Upper lobe of right lung (tissue), 1 donor: ENCODE measurements at regions of chr6 and their contacts with region 1.

Region 1: GRCh38 chr6:30489081-30490025 is at the start of gene HLA-E:
- DNase-seq: peak; percentile 92
- ATAC-seq: peak; percentile 94
- H3K4me3 ChIP-seq: peak within 1 kb of the TSS; percentile 93
- H3K27ac ChIP-seq: peak within 1 kb of the TSS; percentile 97
- H3K4me1 ChIP-seq: peaks cover 34% of the 10 kb centered on the region
- H3K27me3 ChIP-seq: no peaks in the 10 kb centered on the region
- CTCF ChIP-seq: no peak
- total RNA-seq, gene HLA-E: 1,028 TPM

Region 2: GRCh38 chr6:30533460-30534294 is 44.3 kb after region 1 on chr6:
- intact Hi-C with region 1: loop called (anchors 5 kb)
- DNase-seq: no peak
- ATAC-seq: peak; percentile 39
- H3K4me3 ChIP-seq: no peak overlapping the region
- H3K27ac ChIP-seq: peak overlapping the region; percentile 63
- H3K4me1 ChIP-seq: peaks cover 9% of the 10 kb centered on the region
- H3K27me3 ChIP-seq: no peaks in the 10 kb centered on the region
- CTCF ChIP-seq: no peak